SK-N-SH (cell line): ENCODE measurements at regions of chr1 and their contacts with region 1.

Region 1: GRCh38 chr1:209989525-209989924 is 51.5 kb downstream of the SYT14 start:
- DNase-seq: peak; percentile 28
- H3K4me3 ChIP-seq: no peak overlapping the region
- H3K27ac ChIP-seq: peak overlapping the region in 1 of 2 experiments; percentile 40; a peak in 2 of 4 replicates
- H3K4me1 ChIP-seq: peaks cover 0 to 9% of the 10 kb centered on the region in 2 experiments; a peak in 2 of 4 replicates
- H3K27me3 ChIP-seq: no peaks in the 10 kb centered on the region
- CTCF ChIP-seq: peak; percentile 61
- EP300 ChIP-seq: no peak
- RAD21 ChIP-seq: peak; percentile 56

Region 2: GRCh38 chr1:209704584-209704983 is 284.9 kb before region 1 on chr1 and contains the start of gene HSD11B1:
- CTCF ChIA-PET with region 1: no interaction called
- POLR2A ChIA-PET with region 1: no interaction called
- DNase-seq: no peak
- H3K4me3 ChIP-seq: no peak within 1 kb of the TSS
- H3K27ac ChIP-seq: no peak within 1 kb of the TSS
- H3K4me1 ChIP-seq: peaks cover 0 to 13% of the 10 kb centered on the region in 2 experiments
- H3K27me3 ChIP-seq: no peaks in the 10 kb centered on the region
- CTCF ChIP-seq: no peak
- EP300 ChIP-seq: no peak
- RAD21 ChIP-seq: no peak
- polyA plus RNA-seq, gene HSD11B1: 0.23 and 0.37 TPM in 2 replicates

Region 3: GRCh38 chr1:209850342-209850979 is 139.1 kb before region 1 on chr1:
- CTCF ChIA-PET with region 1: interaction called, 317 read pairs
- POLR2A ChIA-PET with region 1: no interaction called
- DNase-seq: peak; percentile 74
- H3K4me3 ChIP-seq: no peak overlapping the region
- H3K27ac ChIP-seq: peak overlapping the region in 1 of 2 experiments; percentile 80; a peak in 2 of 4 replicates
- H3K4me1 ChIP-seq: peaks cover 3 to 11% of the 10 kb centered on the region in 2 experiments; a peak in 3 of 4 replicates
- H3K27me3 ChIP-seq: no peaks in the 10 kb centered on the region
- CTCF ChIP-seq: peak; percentile 92
- EP300 ChIP-seq: no peak
- RAD21 ChIP-seq: peak; percentile 81

Region 4: GRCh38 chr1:209875515-209875914 is 114.0 kb before region 1 on chr1:
- CTCF ChIA-PET with region 1: interaction called, 317 read pairs
- POLR2A ChIA-PET with region 1: no interaction called
- DNase-seq: no peak
- H3K4me3 ChIP-seq: no peak overlapping the region
- H3K27ac ChIP-seq: peak overlapping the region in 1 of 2 experiments; percentile 68; a peak in 2 of 4 replicates
- H3K4me1 ChIP-seq: peaks cover 45 to 55% of the 10 kb centered on the region in 2 experiments
- H3K27me3 ChIP-seq: no peaks in the 10 kb centered on the region
- CTCF ChIP-seq: peak; percentile 63
- EP300 ChIP-seq: no peak
- RAD21 ChIP-seq: peak; percentile 58

Region 5: GRCh38 chr1:209883341-209883971 is 106.1 kb before region 1 on chr1:
- CTCF ChIA-PET with region 1: interaction called, 36 read pairs
- POLR2A ChIA-PET with region 1: no interaction called
- DNase-seq: no peak
- H3K4me3 ChIP-seq: no peak overlapping the region
- H3K27ac ChIP-seq: peak overlapping the region; percentile 51 to 99; a peak in 3 of 4 replicates
- H3K4me1 ChIP-seq: peaks cover 33 to 48% of the 10 kb centered on the region in 2 experiments
- H3K27me3 ChIP-seq: no peaks in the 10 kb centered on the region
- CTCF ChIP-seq: peak; percentile 33
- EP300 ChIP-seq: no peak
- RAD21 ChIP-seq: no peak